ENCODE measurements at regions of chr2 and their contacts with region 1.

Region 1: DNA sequence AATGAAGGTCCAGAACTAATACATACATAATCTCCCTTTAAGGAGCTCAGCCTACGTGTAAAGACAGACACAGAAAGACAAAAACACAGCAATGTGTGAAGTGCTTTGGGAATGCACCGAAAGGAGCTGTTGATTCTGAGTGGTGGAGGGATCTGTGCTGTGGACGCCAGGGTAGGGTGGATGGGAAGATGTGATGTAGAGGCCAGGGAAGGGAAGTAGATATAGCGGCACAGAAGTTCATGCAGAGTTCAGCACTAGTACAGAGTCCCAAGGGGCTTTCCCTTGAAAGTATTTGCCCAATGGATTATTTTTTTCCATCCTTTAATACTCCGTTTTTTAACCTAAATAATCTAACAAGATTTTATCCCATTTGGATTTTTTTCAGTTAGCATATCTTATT is 32.1 kb upstream of the DOCK10 start:
- DNase-seq: no peak
- H3K4me3 ChIP-seq: no peak overlapping the region
- H3K27ac ChIP-seq: no peak overlapping the region
- H3K27me3 ChIP-seq: no peaks in the 10 kb centered on the region
- CTCF ChIP-seq: no peak

Region 2: GRCh38 chr2:225104971-225105370 is 30.6 kb after region 1 on chr2:
- intact Hi-C with region 1: loop called in 1 of 2 experiments (anchors 5 kb)
- DNase-seq: no peak
- H3K4me3 ChIP-seq: no peak overlapping the region
- H3K27ac ChIP-seq: no peak overlapping the region
- H3K27me3 ChIP-seq: peaks cover 0 to 4% (median 0%) of the 10 kb centered on the region in 45 donors
- CTCF ChIP-seq: no peak

Region 3: GRCh38 chr2:225296951-225297350 is 222.6 kb after region 1 on chr2:
- intact Hi-C with region 1: no loop called
- DNase-seq: no peak
- H3K4me3 ChIP-seq: no peak overlapping the region
- H3K27ac ChIP-seq: no peak overlapping the region
- H3K27me3 ChIP-seq: peaks cover 0 to 10% (median 0%) of the 10 kb centered on the region in 45 donors
- CTCF ChIP-seq: no peak

Region 4: GRCh38 chr2:226287930-226288329 is 1213.6 kb after region 1 on chr2:
- intact Hi-C with region 1: no loop called
- DNase-seq: no peak
- H3K4me3 ChIP-seq: no peak overlapping the region
- H3K27ac ChIP-seq: no peak overlapping the region
- H3K27me3 ChIP-seq: peaks cover 0 to 13% (median 0%) of the 10 kb centered on the region in 45 donors
- CTCF ChIP-seq: no peak

Measured in dorsolateral prefrontal cortex (tissue), 120 donors.